ENCODE measurements at regions of chr6 and their contacts with region 1.

Region 1: GRCh38 chr6:114000066-114000465 is 29.1 kb upstream of the HDAC2 start:
- DNase-seq: no peak
- ATAC-seq: no peak
- H3K4me3 ChIP-seq: no peak overlapping the region
- H3K4me3 Mint-ChIP-seq: no peak overlapping the region
- H3K27ac ChIP-seq: no peak overlapping the region
- H3K27ac Mint-ChIP-seq: no peak overlapping the region
- H3K4me1 ChIP-seq: no peaks in the 10 kb centered on the region
- H3K4me1 Mint-ChIP-seq: no peaks in the 10 kb centered on the region
- H3K27me3 ChIP-seq: peaks cover 0 to 3% of the 10 kb centered on the region in 2 experiments
- H3K27me3 Mint-ChIP-seq: peaks cover 20% of the 10 kb centered on the region
- CTCF ChIP-seq: no peak

Region 2: GRCh38 chr6:113626475-113626874 is 373.6 kb before region 1 on chr6:
- CTCF ChIA-PET with region 1: no interaction called
- POLR2A ChIA-PET with region 1: no interaction called
- intact Hi-C with region 1: loop called in 1 of 2 experiments (anchors 5 kb)
- DNase-seq: no peak
- ATAC-seq: no peak
- H3K4me3 ChIP-seq: no peak overlapping the region
- H3K4me3 Mint-ChIP-seq: no peak overlapping the region
- H3K27ac ChIP-seq: no peak overlapping the region
- H3K27ac Mint-ChIP-seq: no peak overlapping the region
- H3K4me1 ChIP-seq: no peaks in the 10 kb centered on the region
- H3K4me1 Mint-ChIP-seq: peaks cover 5% of the 10 kb centered on the region
- H3K27me3 ChIP-seq: no peaks in the 10 kb centered on the region
- H3K27me3 Mint-ChIP-seq: no peaks in the 10 kb centered on the region
- CTCF ChIP-seq: no peak

Measured in CD8-positive, alpha-beta T cell (primary cell).